Posterior cingulate gyrus (tissue), 11 donors: ENCODE measurements at regions of chr7 and their contacts with region 1.

Region 1: DNA sequence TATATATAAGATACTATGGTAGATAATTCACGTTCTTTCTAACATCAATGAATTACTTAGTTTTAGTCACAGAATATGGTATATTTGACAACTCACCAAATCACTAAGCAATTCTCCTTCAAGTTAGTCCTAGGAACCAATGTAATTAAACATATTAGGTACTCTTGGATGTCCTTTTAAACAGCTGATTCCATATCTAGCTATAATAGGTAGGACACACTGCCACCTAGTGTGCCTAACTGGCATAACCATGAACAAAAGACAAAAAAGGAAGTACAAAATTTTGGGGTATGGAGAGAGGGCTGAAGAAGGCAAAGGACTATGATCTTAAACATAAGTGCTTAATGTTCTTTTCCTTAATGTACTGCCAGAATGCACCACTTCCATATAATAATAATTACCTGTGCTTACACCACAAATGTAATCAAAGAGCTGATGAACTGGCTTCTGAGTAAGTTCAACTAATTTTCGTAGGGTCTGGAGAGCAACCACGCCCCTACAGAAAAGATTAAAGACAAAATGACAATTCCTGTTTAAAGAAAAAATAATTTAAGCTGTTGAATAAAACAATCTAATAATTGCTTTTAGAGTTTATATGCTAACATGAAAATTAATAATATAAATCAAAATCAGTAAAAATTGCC is 28.7 kb downstream of the PNPLA8 start:
- DNase-seq: peak in 2 of 10 donors; percentile 22 to 42

Region 2: GRCh38 chr7:108181073-108181985 is 315.9 kb before region 1 on chr7:
- intact Hi-C with region 1: loop called (anchors 1 kb)
- DNase-seq: no peak

Region 3: GRCh38 chr7:108328174-108328651 is 169.0 kb before region 1 on chr7:
- intact Hi-C with region 1: no loop called
- DNase-seq: no peak

Region 4: DNA sequence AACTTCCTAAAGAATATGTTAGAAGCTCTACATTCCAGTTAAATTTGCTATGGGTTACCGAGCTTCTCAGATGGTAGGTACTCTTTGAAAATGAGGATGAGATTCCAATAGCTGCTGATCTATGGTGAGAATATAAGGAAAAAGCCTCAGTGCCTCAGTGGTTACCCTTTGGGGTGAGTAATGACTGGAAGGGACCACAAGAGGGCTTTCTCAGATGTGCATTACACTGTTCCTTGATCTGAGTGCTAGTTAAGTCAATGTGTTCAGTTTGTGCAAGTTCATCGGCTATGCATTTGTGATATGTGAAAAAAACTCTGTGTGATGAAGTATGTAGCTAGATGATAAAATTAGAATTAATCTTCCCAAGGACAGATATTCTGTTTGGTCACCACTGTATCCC is 44.5 kb before region 1 on chr7:
- intact Hi-C with region 1: loop called (anchors 2 kb)
- DNase-seq: no peak

Region 5: GRCh38 chr7:108569381-108570145 is 72.4 kb after region 1 on chr7 and contains the starts of genes DNAJB9 and THAP5:
- intact Hi-C with region 1: no loop called
- DNase-seq: peak; percentile 100